ENCODE measurements at regions of chrX and their contacts with region 1.

Region 1: GRCh38 chrX:43581888-43582515 is 74.1 kb upstream of the MAOA start:
- DNase-seq: peak; percentile 85
- H3K4me3 Mint-ChIP-seq: no peak overlapping the region
- H3K27ac Mint-ChIP-seq: peak overlapping the region; percentile 84
- H3K4me1 Mint-ChIP-seq: peaks cover 9% of the 10 kb centered on the region
- H3K27me3 Mint-ChIP-seq: peaks cover 12% of the 10 kb centered on the region
- CTCF ChIP-seq: no peak

Region 2: GRCh38 chrX:43349363-43349762 is 232.6 kb before region 1 on chrX:
- CTCF ChIA-PET with region 1: no interaction called
- POLR2A ChIA-PET with region 1: no interaction called
- intact Hi-C with region 1: no loop called
- DNase-seq: peak; percentile 70
- H3K4me3 Mint-ChIP-seq: no peak overlapping the region
- H3K27ac Mint-ChIP-seq: no peak overlapping the region
- H3K4me1 Mint-ChIP-seq: no peaks in the 10 kb centered on the region
- H3K27me3 Mint-ChIP-seq: peaks cover 87% of the 10 kb centered on the region
- CTCF ChIP-seq: peak; percentile 80

Region 3: GRCh38 chrX:43595931-43596330 is 13.9 kb after region 1 on chrX:
- CTCF ChIA-PET with region 1: interaction called, 10 read pairs
- POLR2A ChIA-PET with region 1: interaction called, 132 read pairs
- intact Hi-C with region 1: no loop called
- DNase-seq: peak; percentile 47
- H3K4me3 Mint-ChIP-seq: no peak overlapping the region
- H3K27ac Mint-ChIP-seq: no peak overlapping the region
- H3K4me1 Mint-ChIP-seq: peaks cover 6% of the 10 kb centered on the region
- H3K27me3 Mint-ChIP-seq: peaks cover 43% of the 10 kb centered on the region
- CTCF ChIP-seq: no peak

Region 4: DNA sequence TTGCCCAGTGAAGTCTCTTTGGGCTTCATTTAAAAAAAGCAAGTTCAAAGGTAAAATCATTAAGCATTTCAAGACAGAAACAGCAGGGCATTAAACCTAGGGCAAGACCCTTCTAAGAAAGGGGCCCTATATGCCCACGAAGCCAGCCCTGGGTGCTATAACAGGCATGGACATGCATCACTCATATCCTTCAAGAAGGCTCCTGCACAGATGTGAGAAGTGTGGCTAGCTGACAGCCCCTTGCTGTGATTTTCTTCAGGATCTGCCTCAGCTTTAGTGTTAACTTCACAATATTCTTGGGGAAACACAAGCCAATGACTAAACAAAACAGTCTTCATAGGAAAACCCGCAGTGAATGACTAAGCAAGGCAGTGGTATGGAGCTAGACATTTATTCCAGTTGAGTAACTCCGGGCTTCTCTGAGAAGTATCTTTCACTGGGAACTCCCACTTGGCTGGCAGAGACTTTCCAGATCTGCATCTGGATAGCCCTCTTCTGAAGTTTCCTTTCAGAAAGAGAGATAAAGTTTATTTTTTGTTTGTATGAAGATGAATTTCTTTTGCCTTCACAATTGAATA is 62.2 kb after region 1 on chrX:
- CTCF ChIA-PET with region 1: no interaction called
- POLR2A ChIA-PET with region 1: interaction called, 13 read pairs
- intact Hi-C with region 1: loop called (anchors 5 kb)
- DNase-seq: peak; percentile 81
- H3K4me3 Mint-ChIP-seq: no peak overlapping the region
- H3K27ac Mint-ChIP-seq: peak overlapping the region; percentile 82
- H3K4me1 Mint-ChIP-seq: peaks cover 6% of the 10 kb centered on the region
- H3K27me3 Mint-ChIP-seq: peaks cover 31% of the 10 kb centered on the region
- CTCF ChIP-seq: no peak

Region 5: DNA sequence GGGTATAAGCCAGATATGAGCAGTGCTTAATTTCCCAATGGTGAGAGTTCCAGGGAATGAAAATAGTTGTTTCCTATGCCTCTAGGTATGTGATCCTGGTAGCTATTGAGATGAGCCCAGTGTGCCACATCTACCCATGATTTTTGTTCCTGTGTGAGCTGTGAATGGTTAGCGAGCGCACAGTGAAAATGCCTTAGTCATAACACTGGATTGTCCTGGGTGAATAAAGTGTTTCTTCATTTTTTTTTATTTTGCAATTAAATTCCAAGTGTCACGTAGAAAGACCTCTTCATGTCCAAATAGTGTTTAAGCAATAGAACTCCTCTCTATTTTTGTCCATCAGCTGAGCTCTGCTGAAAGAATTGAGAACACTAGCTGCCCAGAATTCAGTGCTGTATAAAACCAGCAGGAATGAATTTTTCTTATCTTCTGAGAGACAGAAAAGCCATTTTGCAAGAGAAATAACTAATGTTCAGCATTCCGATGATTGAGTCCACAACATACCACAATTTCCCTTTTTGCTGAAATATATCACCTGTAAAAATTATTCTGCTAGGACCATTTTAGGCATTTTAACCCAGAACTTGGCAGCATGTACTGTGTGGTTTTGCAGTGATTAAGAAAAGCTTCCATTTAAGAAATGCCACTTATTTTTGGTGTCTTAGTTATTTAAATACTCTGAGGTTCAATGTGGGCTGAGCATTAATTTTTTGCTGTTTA is 79.7 kb after region 1 on chrX:
- CTCF ChIA-PET with region 1: interaction called, 5 read pairs
- POLR2A ChIA-PET with region 1: interaction called, 155 read pairs
- intact Hi-C with region 1: no loop called
- DNase-seq: peak; percentile 72
- H3K4me3 Mint-ChIP-seq: no peak overlapping the region
- H3K27ac Mint-ChIP-seq: no peak overlapping the region
- H3K4me1 Mint-ChIP-seq: no peaks in the 10 kb centered on the region
- H3K27me3 Mint-ChIP-seq: peaks cover 32% of the 10 kb centered on the region
- CTCF ChIP-seq: no peak

Region 6: GRCh38 chrX:43703211-43703791 is 121.3 kb after region 1 on chrX:
- CTCF ChIA-PET with region 1: interaction called, 6 read pairs
- POLR2A ChIA-PET with region 1: interaction called, 41 read pairs
- intact Hi-C with region 1: no loop called
- DNase-seq: peak; percentile 67
- H3K4me3 Mint-ChIP-seq: no peak overlapping the region
- H3K27ac Mint-ChIP-seq: peak overlapping the region; percentile 7
- H3K4me1 Mint-ChIP-seq: peaks cover 15% of the 10 kb centered on the region
- H3K27me3 Mint-ChIP-seq: peaks cover 60% of the 10 kb centered on the region
- CTCF ChIP-seq: no peak

Measured in MCF 10A (cell line).